HEK293T (cell line): ENCODE measurements at regions of chr19 and their contacts with region 1.

Region 1: GRCh38 chr19:15418588-15419412 is at the start of gene AKAP8L:
- DNase-seq: peak; percentile 98

Region 2: GRCh38 chr19:15379083-15379995 is 39.5 kb before region 1 on chr19 and contains the start of gene AKAP8:
- CTCF ChIA-PET with region 1: no interaction called
- POLR2A ChIA-PET with region 1: interaction called, 31 read pairs
- DNase-seq: peak; percentile 99

Region 3: DNA sequence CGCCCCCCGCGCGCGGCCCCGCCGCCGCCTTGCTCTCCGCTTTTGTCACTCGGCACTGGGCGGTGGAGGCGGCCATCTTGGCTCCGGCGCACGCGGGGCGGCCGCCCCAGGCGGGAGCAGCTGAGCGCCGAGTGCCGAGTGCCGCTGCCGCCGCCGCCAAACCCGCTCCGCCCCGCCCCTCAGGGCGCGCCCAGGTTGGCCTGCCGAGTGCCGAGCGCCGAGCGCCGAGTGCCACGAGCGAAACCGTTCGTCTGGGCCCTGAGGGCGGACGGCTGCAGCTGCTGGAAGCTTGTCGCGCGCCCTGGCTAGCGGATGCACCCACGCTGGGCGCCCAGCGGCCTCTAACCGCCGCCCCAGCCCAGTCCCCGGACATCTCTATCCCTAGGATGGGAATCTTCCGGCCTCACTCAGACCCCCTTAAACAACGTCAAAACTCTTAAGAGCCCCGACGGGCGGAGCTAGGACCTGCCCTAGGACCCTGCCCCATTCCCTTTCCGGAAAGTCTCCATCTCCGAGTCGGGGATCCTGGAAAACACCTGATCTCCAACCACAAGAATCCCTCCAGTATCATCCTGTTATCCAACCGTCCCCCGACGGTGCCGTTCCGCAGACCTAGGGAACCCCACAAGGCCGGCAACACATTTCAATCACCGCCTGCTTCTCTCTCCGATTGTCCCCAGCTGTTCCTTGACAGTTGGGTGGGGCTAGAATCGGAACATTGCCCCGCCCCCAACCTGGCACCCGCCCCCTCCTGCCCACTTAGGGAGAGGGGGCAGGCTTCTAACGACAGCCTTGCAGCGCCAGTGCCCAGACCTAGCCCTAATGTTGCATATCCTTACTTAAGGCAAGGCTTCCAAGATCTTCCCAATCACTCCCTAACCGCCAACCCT is 14.1 kb after region 1 on chr19:
- CTCF ChIA-PET with region 1: interaction called, 4 read pairs
- POLR2A ChIA-PET with region 1: interaction called, 54 read pairs
- DNase-seq: peak; percentile 98

Region 4: DNA sequence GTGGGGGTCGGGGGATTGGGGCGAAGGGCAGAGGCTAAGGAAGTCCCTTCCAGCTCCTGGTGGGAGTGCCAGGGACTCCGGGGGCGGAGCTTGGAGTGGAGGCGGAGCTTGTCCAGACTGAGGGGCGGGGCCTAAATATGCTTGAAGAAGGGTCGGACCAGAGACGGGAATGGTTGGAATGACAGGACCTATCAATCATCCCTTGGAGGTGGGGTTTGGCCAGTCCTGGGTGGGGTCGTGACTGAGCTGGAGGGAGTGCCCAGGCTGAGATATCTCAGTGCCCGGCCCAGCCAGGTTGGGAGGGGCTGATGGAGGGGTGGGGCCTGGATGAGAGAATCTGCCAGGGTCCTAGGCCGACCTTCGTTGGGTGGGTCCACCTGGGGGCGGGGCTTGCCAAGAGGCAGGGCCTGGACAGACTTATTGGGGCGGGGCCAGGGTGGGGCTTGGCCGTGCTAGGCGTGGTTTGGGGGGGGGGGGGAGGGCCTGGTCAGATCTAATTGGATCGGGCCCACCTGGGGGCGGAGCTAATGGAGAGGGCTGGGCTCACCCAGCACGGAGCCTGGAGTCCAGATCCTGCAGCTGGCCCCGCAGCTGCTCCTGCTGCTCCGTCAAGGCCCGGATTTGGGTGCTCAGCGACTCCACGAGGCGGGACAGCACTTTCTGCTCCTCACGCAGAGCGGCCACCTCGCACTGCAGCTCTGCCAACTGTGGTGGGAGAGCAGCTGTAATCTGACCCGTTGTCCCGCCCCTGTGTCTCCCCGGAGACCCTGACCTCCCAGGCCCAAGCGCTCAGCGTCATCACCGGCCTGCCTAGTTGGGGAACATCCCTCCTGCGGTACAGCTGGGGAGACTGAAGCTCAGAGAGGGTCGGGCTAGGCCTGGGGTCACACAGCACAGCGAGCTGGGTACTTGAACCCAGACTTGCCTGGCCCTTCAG is 33.6 kb after region 1 on chr19:
- CTCF ChIA-PET with region 1: no interaction called
- POLR2A ChIA-PET with region 1: interaction called, 10 read pairs
- DNase-seq: peak; percentile 98

Region 5: DNA sequence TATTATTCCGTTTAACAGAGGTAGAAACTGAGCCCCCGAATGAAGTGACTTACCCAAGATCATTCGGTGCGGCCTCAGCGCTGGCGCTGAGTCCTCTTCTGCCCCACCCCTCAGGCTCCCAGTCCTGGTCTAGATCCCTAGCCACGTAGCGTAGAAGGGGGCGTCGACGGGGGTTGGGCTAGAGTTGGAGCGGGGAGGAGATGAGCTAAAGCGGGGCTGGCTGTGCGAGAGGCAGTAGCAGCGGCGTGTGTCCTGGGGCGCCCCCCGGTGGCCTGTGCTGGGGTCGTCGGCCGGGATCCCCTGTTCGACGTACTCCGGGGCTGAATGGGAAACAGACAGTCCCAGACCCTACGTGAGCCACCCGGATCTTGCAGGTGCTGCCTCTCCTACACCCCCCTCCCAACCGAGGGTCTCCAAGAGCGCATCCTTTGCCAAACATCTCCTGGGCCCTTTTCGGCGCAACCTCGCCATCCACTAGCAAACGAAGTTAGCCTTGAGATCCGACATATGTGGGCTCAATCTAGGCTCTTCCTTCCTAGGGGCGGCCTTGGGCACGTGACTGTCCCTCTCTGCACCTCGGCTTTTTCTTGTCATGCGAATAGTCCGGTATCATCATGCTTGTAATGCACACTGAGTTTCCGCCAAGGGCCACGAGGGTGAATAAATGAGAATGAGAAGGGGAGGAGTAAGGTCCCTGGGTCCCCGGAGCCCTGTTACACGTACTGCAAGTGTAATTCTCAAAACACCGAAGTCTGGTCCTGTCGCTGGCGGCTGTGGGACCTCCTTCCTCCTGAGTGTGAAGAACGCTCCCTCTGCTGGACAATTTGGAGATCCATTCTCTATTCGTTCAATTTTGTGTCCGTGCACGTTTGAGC is 137.2 kb after region 1 on chr19:
- CTCF ChIA-PET with region 1: interaction called, 28 read pairs
- POLR2A ChIA-PET with region 1: interaction called, 6 read pairs
- DNase-seq: peak; percentile 95